Right ventricle myocardium superior (tissue), 1 donor: ENCODE measurements at regions of chr12 and their contacts with region 1.

Region 1: DNA sequence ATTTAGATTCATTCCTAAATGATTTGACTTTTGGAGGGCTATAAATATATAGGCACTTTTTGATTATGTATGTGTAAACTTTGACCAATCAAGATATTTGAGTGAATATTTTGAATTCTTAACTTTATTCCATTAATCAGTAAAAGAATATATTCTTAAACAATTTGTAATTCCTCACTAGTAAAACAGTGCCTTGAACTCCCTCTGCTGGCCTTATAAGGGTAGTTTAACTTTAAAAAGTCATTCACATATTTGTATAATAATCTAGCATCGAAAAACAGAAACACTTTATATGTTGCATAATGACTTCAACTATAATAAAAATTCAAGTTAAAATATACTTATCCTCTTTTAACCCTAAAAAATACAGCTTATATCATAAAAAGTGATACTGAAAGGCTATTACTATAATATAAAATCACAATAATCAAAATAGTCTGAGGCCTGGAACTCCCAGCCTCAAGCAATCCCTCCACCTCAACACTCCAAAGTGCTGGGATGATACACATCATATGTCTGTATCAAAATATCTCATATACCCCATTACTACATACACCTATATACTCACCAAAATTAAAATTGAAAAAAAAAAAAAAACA is 31.2 kb downstream of the CCDC59 start:
- DNase-seq: no peak
- ATAC-seq: no peak

Region 2: DNA sequence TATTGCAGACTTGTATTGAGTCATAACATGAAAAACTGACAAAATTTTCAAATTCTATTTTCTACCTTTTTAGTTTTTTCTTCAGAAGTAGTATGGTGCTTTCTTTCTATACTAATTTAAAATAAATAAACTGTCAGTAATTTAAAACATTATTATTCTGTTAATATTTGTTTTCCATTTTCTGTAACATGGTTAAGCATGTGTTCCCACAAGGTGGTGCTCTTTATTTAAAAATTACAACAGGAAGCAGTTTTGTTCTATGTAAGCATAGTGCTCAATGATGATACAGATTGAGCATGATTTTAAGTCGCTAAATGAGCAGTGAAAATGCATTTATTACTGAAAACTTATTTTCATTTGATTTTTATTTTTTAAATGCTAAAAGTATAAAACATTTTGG is 682.5 kb before region 1 on chr12:
- intact Hi-C with region 1: loop called (anchors 5 kb)
- DNase-seq: no peak
- ATAC-seq: peak; percentile 66

Region 3: GRCh38 chr12:82264752-82265151 is 62.3 kb before region 1 on chr12:
- intact Hi-C with region 1: no loop called
- DNase-seq: no peak
- ATAC-seq: no peak